Dorsolateral prefrontal cortex (tissue), 120 donors: ENCODE measurements at regions of chr10 and their contacts with region 1.

Region 1: GRCh38 chr10:62804356-62805230 is at the start of gene ADO:
- DNase-seq: peak; percentile 89 to 95 (median 92)
- H3K4me3 ChIP-seq: peak within 1 kb of the TSS; percentile 73 to 98 (median 89)
- H3K27ac ChIP-seq: peak within 1 kb of the TSS; percentile 95 to 100 (median 99)
- H3K27me3 ChIP-seq: no peaks in the 10 kb centered on the region
- CTCF ChIP-seq: peak in 22 of 56 donors; percentile 5 to 43 (median 16)
- total RNA-seq, gene ADO: 21.1 to 44.3 (median 32.3) TPM

Region 2: DNA sequence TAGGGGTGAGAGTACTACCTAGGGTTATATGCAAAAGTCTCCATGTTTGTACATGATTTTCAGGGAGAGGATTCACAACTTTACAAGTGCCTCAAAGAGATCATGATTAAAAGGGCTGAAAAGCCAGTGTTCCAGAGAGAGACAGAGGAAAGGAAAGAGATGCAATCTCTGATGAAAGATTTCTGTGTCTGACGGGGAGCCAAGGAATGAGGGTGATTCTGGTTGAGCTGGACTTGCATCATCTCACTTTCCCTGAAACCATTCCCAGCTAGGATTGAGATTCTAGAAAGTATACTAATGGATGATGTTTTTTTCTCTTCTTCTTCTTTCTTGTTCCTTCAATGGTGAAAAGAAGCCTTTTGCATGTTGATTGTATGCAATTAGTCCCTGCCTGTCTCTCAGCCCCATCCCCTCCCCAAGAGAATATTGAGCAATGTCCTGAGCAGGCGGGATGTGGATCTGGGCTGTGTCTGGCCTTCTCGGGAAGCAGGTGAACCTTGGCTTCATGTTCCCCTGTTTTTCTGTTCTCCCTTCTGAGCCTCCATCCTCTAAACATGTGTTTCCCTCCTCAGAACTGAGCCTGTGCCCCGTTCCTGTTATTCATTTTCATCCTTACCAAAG is 244.3 kb before region 1 on chr10:
- intact Hi-C with region 1: loop called in 1 of 2 experiments (anchors 5 kb)
- DNase-seq: no peak
- H3K4me3 ChIP-seq: no peak overlapping the region
- H3K27ac ChIP-seq: no peak overlapping the region
- H3K27me3 ChIP-seq: no peaks in the 10 kb centered on the region
- CTCF ChIP-seq: no peak

Region 3: DNA sequence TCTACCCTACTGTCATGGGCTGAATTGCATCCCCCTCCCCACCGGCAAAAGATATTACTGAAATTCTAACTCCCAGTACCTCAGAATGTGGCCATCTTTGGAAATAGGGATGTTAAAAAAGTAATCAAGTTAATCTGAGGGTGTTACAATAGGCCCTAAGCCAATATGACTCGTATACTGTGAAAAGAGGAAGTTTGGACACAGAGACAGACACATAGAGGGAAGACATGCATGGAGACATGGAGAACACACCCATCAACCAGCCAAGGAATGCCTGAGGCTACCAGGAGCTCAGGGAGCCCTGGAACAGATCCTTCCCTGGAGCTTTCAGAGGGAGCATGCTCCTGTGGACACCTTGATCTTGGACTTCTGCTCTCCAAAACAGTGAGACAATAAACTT is 138.3 kb before region 1 on chr10:
- intact Hi-C with region 1: loop called (anchors 5 to 10 kb)
- DNase-seq: no peak
- H3K4me3 ChIP-seq: peak overlapping the region in 1 of 59 donors; percentile 2
- H3K27ac ChIP-seq: peak overlapping the region in 8 of 59 donors; percentile 5 to 55 (median 30)
- H3K27me3 ChIP-seq: no peaks in the 10 kb centered on the region
- CTCF ChIP-seq: no peak

Region 4: GRCh38 chr10:63133056-63133820 is 328.6 kb after region 1 on chr10 and contains the start of gene NRBF2:
- intact Hi-C with region 1: loop called in 1 of 2 experiments (anchors 5 kb)
- DNase-seq: peak; percentile 87 to 97 (median 96)
- H3K4me3 ChIP-seq: peak within 1 kb of the TSS; percentile 68 to 99 (median 92)
- H3K27ac ChIP-seq: peak within 1 kb of the TSS; percentile 50 to 95 (median 86)
- H3K27me3 ChIP-seq: no peaks in the 10 kb centered on the region
- CTCF ChIP-seq: peak in 25 of 56 donors; percentile 1 to 42 (median 19)
- total RNA-seq, gene NRBF2: 8.6 to 26.3 (median 19.6) TPM